CD8-positive, alpha-beta memory T cell (primary cell): ENCODE measurements at regions of chr7 and their contacts with region 1.

Region 1: GRCh38 chr7:151782598-151783448 is 94.1 kb downstream of the PRKAG2 start:
- DNase-seq: peak; percentile 52 to 74 (median 59)
- H3K4me3 ChIP-seq: peak overlapping the region; percentile 68
- H3K4me3 Mint-ChIP-seq: peak overlapping the region; percentile 28 to 89 (median 83)
- H3K27ac ChIP-seq: no peak overlapping the region
- H3K27ac Mint-ChIP-seq: peak overlapping the region in 6 of 8 donors; percentile 66 to 89 (median 80)
- H3K4me1 ChIP-seq: no peaks in the 10 kb centered on the region
- H3K4me1 Mint-ChIP-seq: peaks cover 7 to 20% (median 9%) of the 10 kb centered on the region in 3 donors
- H3K27me3 ChIP-seq: no peaks in the 10 kb centered on the region
- H3K27me3 Mint-ChIP-seq: peaks cover 0 to 3% of the 10 kb centered on the region in 2 donors

Region 2: DNA sequence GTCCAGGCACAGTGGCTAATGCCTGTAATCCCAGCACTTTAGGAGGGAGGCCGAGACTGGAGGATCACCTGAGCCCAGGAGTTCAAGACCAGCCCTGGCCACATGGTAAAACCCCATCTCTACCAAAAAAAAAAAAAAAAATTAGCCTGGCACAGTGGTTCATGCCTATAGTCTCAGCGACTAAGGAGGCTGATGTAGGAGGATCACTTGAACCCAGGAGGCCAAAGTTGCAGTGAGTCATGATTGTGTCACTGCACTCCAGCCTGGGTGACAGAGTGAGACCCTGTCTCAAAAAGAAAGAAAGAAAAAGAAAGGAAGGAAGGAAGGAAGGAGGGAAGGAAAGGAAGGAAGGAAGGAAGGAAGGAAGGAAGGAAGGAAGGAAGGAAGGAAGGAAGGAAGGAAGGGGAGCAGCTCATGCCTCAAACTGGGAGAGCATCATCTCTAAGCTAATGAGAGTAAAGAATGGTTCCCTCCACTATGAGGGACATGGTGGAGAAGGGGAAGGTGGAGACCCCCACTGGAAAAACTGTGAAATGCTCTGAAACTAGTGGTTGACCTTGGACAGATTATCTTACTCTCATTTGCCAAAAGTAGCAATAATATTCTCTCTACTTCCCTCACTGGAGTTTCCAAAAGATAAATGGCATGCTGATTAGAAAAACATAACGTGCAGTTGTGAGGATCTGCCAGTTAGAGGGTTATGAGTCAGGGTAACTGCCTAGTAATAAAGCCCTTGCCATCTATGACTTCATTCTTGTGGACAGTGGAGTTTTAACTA is 1028.8 kb before region 1 on chr7:
- CTCF ChIA-PET with region 1: no interaction called
- POLR2A ChIA-PET with region 1: no interaction called
- DNase-seq: no peak
- H3K4me3 ChIP-seq: peak overlapping the region; percentile 15
- H3K4me3 Mint-ChIP-seq: peak overlapping the region in 6 of 7 donors; percentile 33 to 66 (median 54)
- H3K27ac ChIP-seq: no peak overlapping the region
- H3K27ac Mint-ChIP-seq: peak overlapping the region; percentile 75 to 97 (median 88)
- H3K4me1 ChIP-seq: peaks cover 79% of the 10 kb centered on the region
- H3K4me1 Mint-ChIP-seq: peaks cover 65 to 82% (median 81%) of the 10 kb centered on the region in 3 donors
- H3K27me3 ChIP-seq: no peaks in the 10 kb centered on the region
- H3K27me3 Mint-ChIP-seq: peaks cover 0 to 3% of the 10 kb centered on the region in 2 donors

Region 3: DNA sequence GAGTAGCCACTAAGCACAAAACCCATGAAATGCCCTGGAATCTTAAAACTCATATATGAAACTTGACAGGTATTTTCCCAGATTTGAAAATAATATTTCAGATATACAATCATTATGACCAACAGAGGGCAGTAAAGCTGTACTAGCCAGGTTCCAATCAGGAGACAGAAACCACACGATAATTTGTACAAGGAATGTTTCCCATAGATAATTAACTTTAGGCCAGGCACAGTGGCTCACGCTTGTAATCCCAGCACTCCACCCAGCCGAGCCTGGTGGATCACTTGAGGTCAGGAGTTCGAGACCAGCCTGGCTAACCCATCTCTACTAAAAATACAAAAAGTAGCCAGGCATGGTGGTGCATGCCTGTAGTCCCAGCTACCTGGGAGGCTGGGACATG is 472.2 kb before region 1 on chr7:
- CTCF ChIA-PET with region 1: no interaction called
- POLR2A ChIA-PET with region 1: no interaction called
- DNase-seq: no peak
- H3K4me3 ChIP-seq: no peak overlapping the region
- H3K4me3 Mint-ChIP-seq: no peak overlapping the region
- H3K27ac ChIP-seq: no peak overlapping the region
- H3K27ac Mint-ChIP-seq: no peak overlapping the region
- H3K4me1 ChIP-seq: no peaks in the 10 kb centered on the region
- H3K4me1 Mint-ChIP-seq: peaks cover 3 to 5% (median 4%) of the 10 kb centered on the region in 3 donors
- H3K27me3 ChIP-seq: no peaks in the 10 kb centered on the region
- H3K27me3 Mint-ChIP-seq: peaks cover 4 to 30% of the 10 kb centered on the region in 2 donors

Region 4: GRCh38 chr7:151539088-151539671 is 243.6 kb before region 1 on chr7:
- CTCF ChIA-PET with region 1: no interaction called
- POLR2A ChIA-PET with region 1: no interaction called
- DNase-seq: no peak
- H3K4me3 ChIP-seq: no peak overlapping the region
- H3K4me3 Mint-ChIP-seq: no peak overlapping the region
- H3K27ac ChIP-seq: no peak overlapping the region
- H3K27ac Mint-ChIP-seq: no peak overlapping the region
- H3K4me1 ChIP-seq: no peaks in the 10 kb centered on the region
- H3K4me1 Mint-ChIP-seq: peaks cover 0 to 8% (median 7%) of the 10 kb centered on the region in 3 donors
- H3K27me3 ChIP-seq: peaks cover 6% of the 10 kb centered on the region
- H3K27me3 Mint-ChIP-seq: peaks cover 20 to 48% of the 10 kb centered on the region in 2 donors

Region 5: GRCh38 chr7:151579644-151580043 is 203.2 kb before region 1 on chr7:
- CTCF ChIA-PET with region 1: no interaction called
- POLR2A ChIA-PET with region 1: no interaction called
- DNase-seq: no peak
- H3K4me3 ChIP-seq: no peak overlapping the region
- H3K4me3 Mint-ChIP-seq: no peak overlapping the region
- H3K27ac ChIP-seq: no peak overlapping the region
- H3K27ac Mint-ChIP-seq: peak overlapping the region in 1 of 8 donors; percentile 70
- H3K4me1 ChIP-seq: no peaks in the 10 kb centered on the region
- H3K4me1 Mint-ChIP-seq: peaks cover 3 to 6% (median 4%) of the 10 kb centered on the region in 3 donors
- H3K27me3 ChIP-seq: no peaks in the 10 kb centered on the region
- H3K27me3 Mint-ChIP-seq: no peaks in the 10 kb centered on the region

Region 6: GRCh38 chr7:151759591-151760042 is 23.2 kb before region 1 on chr7:
- CTCF ChIA-PET with region 1: interaction called, 21 read pairs
- POLR2A ChIA-PET with region 1: no interaction called
- DNase-seq: peak; percentile 21 to 71 (median 47)
- H3K4me3 ChIP-seq: no peak overlapping the region
- H3K4me3 Mint-ChIP-seq: no peak overlapping the region
- H3K27ac ChIP-seq: no peak overlapping the region
- H3K27ac Mint-ChIP-seq: peak overlapping the region in 4 of 8 donors; percentile 10 to 81 (median 31)
- H3K4me1 ChIP-seq: peaks cover 28% of the 10 kb centered on the region
- H3K4me1 Mint-ChIP-seq: peaks cover 22 to 36% (median 28%) of the 10 kb centered on the region in 3 donors
- H3K27me3 ChIP-seq: no peaks in the 10 kb centered on the region
- H3K27me3 Mint-ChIP-seq: peaks cover 0 to 4% of the 10 kb centered on the region in 2 donors

Region 7: GRCh38 chr7:151769188-151769841 is 13.5 kb before region 1 on chr7:
- CTCF ChIA-PET with region 1: interaction called, 21 read pairs
- POLR2A ChIA-PET with region 1: no interaction called
- DNase-seq: peak in 4 of 5 donors; percentile 12 to 89 (median 70)
- H3K4me3 ChIP-seq: peak overlapping the region; percentile 32
- H3K4me3 Mint-ChIP-seq: peak overlapping the region; percentile 14 to 81 (median 78)
- H3K27ac ChIP-seq: peak overlapping the region; percentile 22
- H3K27ac Mint-ChIP-seq: peak overlapping the region; percentile 86 to 98 (median 96)
- H3K4me1 ChIP-seq: peaks cover 49% of the 10 kb centered on the region
- H3K4me1 Mint-ChIP-seq: peaks cover 42 to 66% (median 60%) of the 10 kb centered on the region in 3 donors
- H3K27me3 ChIP-seq: no peaks in the 10 kb centered on the region
- H3K27me3 Mint-ChIP-seq: no peaks in the 10 kb centered on the region

Region 8: DNA sequence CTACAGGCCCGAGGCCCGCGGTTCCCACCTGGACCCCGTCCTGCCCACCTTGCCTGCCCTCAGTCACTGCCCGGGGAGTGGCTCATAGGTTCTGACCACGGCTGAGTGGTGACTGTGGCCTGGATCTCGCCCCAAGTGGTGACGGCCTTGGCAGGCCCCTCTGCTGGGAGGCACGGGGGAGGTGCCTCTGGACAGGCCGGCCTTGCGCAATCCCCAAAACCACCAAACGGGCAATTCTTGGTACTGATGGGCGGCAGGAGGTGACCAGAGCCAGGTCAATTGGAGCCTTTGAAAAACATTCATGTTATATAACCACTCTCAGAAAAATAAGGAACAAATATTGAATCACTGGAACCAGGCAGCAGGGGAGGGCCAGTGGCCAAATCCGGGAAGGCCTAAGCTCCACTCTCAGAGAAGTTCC is 10.7 kb after region 1 on chr7:
- CTCF ChIA-PET with region 1: interaction called, 14 read pairs
- POLR2A ChIA-PET with region 1: no interaction called
- DNase-seq: no peak
- H3K4me3 ChIP-seq: no peak overlapping the region
- H3K4me3 Mint-ChIP-seq: peak overlapping the region in 1 of 7 donors; percentile 69
- H3K27ac ChIP-seq: no peak overlapping the region
- H3K27ac Mint-ChIP-seq: no peak overlapping the region
- H3K4me1 ChIP-seq: peaks cover 7% of the 10 kb centered on the region
- H3K4me1 Mint-ChIP-seq: peaks cover 20 to 39% (median 37%) of the 10 kb centered on the region in 3 donors
- H3K27me3 ChIP-seq: no peaks in the 10 kb centered on the region
- H3K27me3 Mint-ChIP-seq: peaks cover 0 to 2% of the 10 kb centered on the region in 2 donors

Region 9: GRCh38 chr7:151876899-151877777 is 94.3 kb after region 1 on chr7 and contains the start of gene PRKAG2:
- CTCF ChIA-PET with region 1: interaction called, 10 read pairs
- POLR2A ChIA-PET with region 1: no interaction called
- DNase-seq: peak; percentile 58 to 86 (median 76)
- H3K4me3 ChIP-seq: peak within 1 kb of the TSS; percentile 98
- H3K4me3 Mint-ChIP-seq: peak within 1 kb of the TSS; percentile 93 to 100 (median 96)
- H3K27ac ChIP-seq: peak within 1 kb of the TSS; percentile 64
- H3K27ac Mint-ChIP-seq: peak within 1 kb of the TSS; percentile 86 to 98 (median 92)
- H3K4me1 ChIP-seq: peaks cover 12% of the 10 kb centered on the region
- H3K4me1 Mint-ChIP-seq: peaks cover 9 to 26% (median 19%) of the 10 kb centered on the region in 3 donors
- H3K27me3 ChIP-seq: no peaks in the 10 kb centered on the region
- H3K27me3 Mint-ChIP-seq: peaks cover 0 to 2% of the 10 kb centered on the region in 2 donors
- total RNA-seq, gene PRKAG2: 23.1 to 27.2 TPM